ENCODE measurements at regions of chr18 and their contacts with region 1.

Region 1: DNA sequence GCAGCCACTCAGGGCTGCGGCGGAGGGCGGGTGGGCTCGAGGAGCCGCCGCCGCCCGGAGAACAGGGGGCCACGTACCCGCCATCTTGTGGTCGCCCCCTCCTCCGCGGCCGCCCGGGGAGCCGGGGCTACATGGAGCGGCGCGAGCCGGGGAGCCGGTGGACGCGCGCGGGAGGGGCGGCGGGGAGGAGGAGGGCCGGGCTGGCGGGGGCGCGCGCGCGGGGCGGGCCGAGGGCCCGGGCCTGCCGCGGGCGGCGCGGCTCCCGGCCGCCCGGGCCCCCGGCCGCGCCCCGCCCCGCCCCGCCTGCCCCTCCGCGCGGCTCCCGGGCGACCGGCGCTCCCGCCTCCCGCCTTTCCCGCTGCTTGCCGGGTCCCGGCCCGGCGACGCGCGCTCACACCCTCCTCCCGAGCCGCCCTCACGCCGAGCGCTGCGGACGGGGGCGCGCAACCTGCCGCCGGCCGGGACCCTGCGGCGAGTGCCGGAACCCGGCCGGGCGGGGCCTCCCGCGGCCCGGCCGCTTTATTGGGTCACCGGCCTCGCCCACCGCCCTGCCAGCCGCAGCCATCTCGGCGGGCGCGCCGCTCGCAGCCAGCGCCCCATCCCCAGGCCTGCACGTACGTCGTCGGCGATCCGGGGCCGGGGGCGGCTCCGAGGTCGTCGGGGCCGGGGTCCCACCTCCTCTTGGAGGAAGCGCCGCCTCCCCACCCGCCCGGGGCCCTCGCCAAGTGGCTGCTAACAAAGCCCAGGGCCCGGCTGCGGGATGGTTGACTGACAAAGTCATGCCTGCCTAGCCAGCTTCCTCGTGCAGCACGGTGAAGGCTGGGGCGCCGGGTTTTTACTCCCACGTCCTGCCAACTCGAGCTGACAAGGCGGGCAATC is at the start of gene PPP4R1:
- DNase-seq: peak; percentile 33 to 79 (median 56)
- ATAC-seq: peak; percentile 84
- H3K4me3 ChIP-seq: peak within 1 kb of the TSS; percentile 65
- H3K4me3 Mint-ChIP-seq: peak within 1 kb of the TSS; percentile 88 to 99 (median 96)
- H3K27ac ChIP-seq: peak within 1 kb of the TSS; percentile 65
- H3K27ac Mint-ChIP-seq: peak within 1 kb of the TSS; percentile 71 to 96 (median 89)
- H3K4me1 ChIP-seq: peaks cover 12 to 17% of the 10 kb centered on the region in 2 donors
- H3K4me1 Mint-ChIP-seq: peaks cover 26 to 46% (median 33%) of the 10 kb centered on the region in 7 donors
- H3K27me3 ChIP-seq: no peaks in the 10 kb centered on the region
- H3K27me3 Mint-ChIP-seq: peaks cover 0 to 3% (median 0%) of the 10 kb centered on the region in 5 donors
- total RNA-seq, gene PPP4R1: 33.0 to 54.6 (median 38.2) TPM

Region 2: DNA sequence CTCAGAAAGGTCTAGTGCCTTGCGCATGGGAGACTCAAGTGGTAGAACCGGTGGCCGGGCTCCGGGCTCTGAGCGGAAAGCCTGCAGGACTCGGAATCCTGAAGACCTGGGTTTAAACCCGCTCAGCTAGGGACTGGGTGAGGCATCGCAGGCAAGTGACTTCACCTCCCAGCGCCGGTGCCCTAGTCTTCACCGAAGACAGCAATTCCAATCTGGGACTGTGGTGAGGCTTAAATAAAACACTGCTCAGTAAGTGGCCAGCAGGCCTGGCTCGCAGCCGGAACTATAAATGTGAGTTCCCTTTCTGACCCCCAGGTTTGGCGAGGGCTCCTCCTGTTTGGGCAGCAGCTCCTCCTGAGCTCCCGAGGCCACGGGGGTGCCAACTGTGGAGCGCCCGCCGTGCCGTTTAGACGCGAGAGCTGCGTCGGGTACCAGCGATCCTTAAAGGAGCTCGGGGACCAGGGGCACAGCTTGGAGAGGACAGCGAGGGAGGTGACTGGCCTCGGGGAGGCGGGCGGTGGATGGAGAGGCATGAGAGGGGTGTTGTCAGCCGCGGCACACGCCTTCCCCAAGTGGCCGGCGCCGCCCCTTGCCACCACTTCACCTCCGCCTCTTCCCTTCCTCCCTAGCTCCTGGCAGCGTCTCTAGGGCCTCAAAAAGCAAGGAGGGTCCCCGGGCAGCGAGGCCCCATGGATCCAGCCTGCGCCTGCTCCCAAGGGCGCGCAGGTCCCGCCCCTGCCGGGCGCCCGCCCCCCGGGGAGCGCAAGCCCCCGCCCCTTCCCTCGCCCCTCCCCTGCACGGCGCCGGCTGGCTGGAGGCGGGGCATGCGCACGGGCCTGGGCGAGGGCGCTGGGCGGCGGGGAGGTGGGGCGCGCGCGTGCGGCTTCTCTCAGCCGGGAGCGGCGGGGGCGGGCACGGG is 910.0 kb before region 1 on chr18:
- CTCF ChIA-PET with region 1: no interaction called
- POLR2A ChIA-PET with region 1: no interaction called
- intact Hi-C with region 1: loop called (anchors 2 to 10 kb)
- DNase-seq: peak; percentile 65 to 92 (median 75)
- ATAC-seq: peak; percentile 96
- H3K4me3 ChIP-seq: peak overlapping the region; percentile 75
- H3K4me3 Mint-ChIP-seq: peak overlapping the region; percentile 83 to 96 (median 90)
- H3K27ac ChIP-seq: peak overlapping the region; percentile 25
- H3K27ac Mint-ChIP-seq: peak overlapping the region in 4 of 9 donors; percentile 4 to 67 (median 48)
- H3K4me1 ChIP-seq: peaks cover 6 to 21% of the 10 kb centered on the region in 2 donors
- H3K4me1 Mint-ChIP-seq: peaks cover 13 to 29% (median 17%) of the 10 kb centered on the region in 7 donors
- H3K27me3 ChIP-seq: peaks cover 5 to 19% of the 10 kb centered on the region in 2 donors
- H3K27me3 Mint-ChIP-seq: peaks cover 60 to 78% (median 68%) of the 10 kb centered on the region in 5 donors

Region 3: DNA sequence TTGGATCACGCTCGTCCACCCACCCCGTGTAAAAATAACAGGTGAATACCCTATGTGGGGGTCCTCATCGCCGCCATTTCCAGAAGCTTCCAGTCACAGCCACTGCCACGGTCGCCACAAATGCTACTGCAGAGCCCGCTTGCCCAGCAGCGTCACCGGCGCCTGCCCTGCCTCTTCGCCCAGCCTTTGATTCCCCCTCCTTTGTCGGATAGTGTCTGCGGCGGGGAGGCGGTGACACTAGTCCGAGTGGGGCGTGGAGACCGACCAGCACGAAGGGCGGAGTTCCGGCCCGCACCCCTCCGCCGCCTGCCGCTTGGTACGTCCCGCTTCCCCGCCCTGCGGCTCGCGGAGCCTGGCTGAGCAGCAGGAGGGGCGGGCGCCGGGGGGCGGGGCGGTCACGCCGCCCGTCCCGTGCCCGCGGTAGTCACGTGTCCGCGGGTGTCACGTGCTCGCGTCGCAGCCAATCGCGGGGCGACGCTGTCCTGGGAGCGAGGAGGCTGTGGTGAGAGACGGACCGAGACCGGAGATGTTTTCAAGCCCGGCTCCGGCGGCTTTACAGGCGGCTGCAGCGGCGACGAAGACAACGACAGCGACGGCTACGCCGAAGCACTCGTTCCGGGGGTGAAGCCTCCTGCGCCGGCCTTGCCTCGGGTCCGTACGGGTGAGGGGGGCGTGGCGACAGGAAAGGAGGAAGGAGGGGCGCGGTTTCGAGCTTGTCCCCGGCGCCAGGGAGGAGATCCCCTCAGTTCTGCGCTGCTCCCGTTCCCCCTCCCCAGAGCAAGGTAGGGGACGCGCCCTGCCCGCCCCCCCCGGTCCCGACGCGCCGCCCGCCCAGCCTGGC is 478.1 kb before region 1 on chr18 and contains the start of gene ANKRD12:
- CTCF ChIA-PET with region 1: no interaction called
- POLR2A ChIA-PET with region 1: no interaction called
- intact Hi-C with region 1: loop called (anchors 5 to 10 kb)
- DNase-seq: peak; percentile 93 to 98 (median 96)
- ATAC-seq: peak; percentile 89
- H3K4me3 ChIP-seq: peak within 1 kb of the TSS; percentile 86
- H3K4me3 Mint-ChIP-seq: peak within 1 kb of the TSS; percentile 95 to 99 (median 98)
- H3K27ac ChIP-seq: peak within 1 kb of the TSS; percentile 88
- H3K27ac Mint-ChIP-seq: peak within 1 kb of the TSS; percentile 95 to 99 (median 98)
- H3K4me1 ChIP-seq: peaks cover 42 to 50% of the 10 kb centered on the region in 2 donors
- H3K4me1 Mint-ChIP-seq: peaks cover 45 to 75% (median 69%) of the 10 kb centered on the region in 7 donors
- H3K27me3 ChIP-seq: no peaks in the 10 kb centered on the region
- H3K27me3 Mint-ChIP-seq: no peaks in the 10 kb centered on the region
- total RNA-seq, gene ANKRD12: 98.9 to 274 (median 204) TPM

Region 4: GRCh38 chr18:9661564-9661963 is 46.9 kb after region 1 on chr18:
- CTCF ChIA-PET with region 1: no interaction called
- POLR2A ChIA-PET with region 1: no interaction called
- intact Hi-C with region 1: loop called in 1 of 2 experiments (anchors 1 kb)
- DNase-seq: no peak
- ATAC-seq: no peak
- H3K4me3 ChIP-seq: no peak overlapping the region
- H3K4me3 Mint-ChIP-seq: no peak overlapping the region
- H3K27ac ChIP-seq: no peak overlapping the region
- H3K27ac Mint-ChIP-seq: no peak overlapping the region
- H3K4me1 ChIP-seq: no peaks in the 10 kb centered on the region
- H3K4me1 Mint-ChIP-seq: no peaks in the 10 kb centered on the region
- H3K27me3 ChIP-seq: no peaks in the 10 kb centered on the region
- H3K27me3 Mint-ChIP-seq: peaks cover 0 to 8% (median 0%) of the 10 kb centered on the region in 5 donors

Region 5: GRCh38 chr18:9722691-9723090 is 108.1 kb after region 1 on chr18:
- CTCF ChIA-PET with region 1: interaction called, 3 read pairs
- POLR2A ChIA-PET with region 1: no interaction called
- intact Hi-C with region 1: loop called in 1 of 2 experiments (anchors 1 kb)
- DNase-seq: no peak
- ATAC-seq: peak; percentile 32
- H3K4me3 ChIP-seq: no peak overlapping the region
- H3K4me3 Mint-ChIP-seq: no peak overlapping the region
- H3K27ac ChIP-seq: no peak overlapping the region
- H3K27ac Mint-ChIP-seq: no peak overlapping the region
- H3K4me1 ChIP-seq: no peaks in the 10 kb centered on the region
- H3K4me1 Mint-ChIP-seq: no peaks in the 10 kb centered on the region
- H3K27me3 ChIP-seq: no peaks in the 10 kb centered on the region
- H3K27me3 Mint-ChIP-seq: peaks cover 9 to 19% (median 17%) of the 10 kb centered on the region in 5 donors

Region 6: DNA sequence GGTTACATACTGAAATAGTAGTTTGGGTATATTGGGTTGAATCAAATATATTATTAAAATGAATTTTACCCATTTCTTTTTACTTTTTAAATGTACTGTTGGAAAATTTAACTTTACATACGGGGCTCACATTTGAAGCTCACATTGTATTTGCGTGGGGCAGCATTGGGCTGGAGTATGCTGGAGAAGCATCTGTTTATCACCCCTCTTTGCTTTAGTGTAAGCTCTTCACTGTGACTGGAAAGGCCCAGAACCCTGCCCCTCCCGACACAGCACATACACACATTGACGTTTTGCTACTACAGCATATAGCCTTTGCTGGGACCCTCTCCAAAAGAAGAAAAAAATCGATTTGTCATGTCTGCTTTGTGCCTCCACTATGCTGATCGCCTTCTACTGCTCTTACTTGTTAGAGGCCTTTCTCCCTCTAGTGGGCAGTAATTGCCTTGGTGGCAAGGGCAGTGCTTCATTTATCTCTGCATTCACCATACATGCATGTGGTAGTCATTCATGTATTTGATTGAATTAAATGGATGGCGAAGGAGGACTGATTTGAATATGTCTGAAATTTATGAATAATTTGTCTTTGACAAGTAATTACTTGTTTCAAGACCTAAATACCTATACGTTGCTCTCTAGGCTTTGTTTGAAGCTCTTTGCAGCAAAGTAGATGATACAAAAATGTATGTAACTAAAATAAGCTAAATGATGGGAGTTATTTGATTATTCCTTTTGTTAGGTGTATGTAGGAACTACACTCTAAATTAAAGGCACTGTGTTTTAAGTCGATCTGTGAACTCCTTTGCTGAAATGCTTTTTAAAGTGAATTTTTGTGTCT is 336.6 kb after region 1 on chr18:
- CTCF ChIA-PET with region 1: no interaction called
- POLR2A ChIA-PET with region 1: no interaction called
- intact Hi-C with region 1: loop called in 1 of 2 experiments (anchors 2 kb)
- DNase-seq: peak in 4 of 9 donors; percentile 8 to 30 (median 24)
- ATAC-seq: peak; percentile 76
- H3K4me3 ChIP-seq: no peak overlapping the region
- H3K4me3 Mint-ChIP-seq: no peak overlapping the region
- H3K27ac ChIP-seq: no peak overlapping the region
- H3K27ac Mint-ChIP-seq: peak overlapping the region in 5 of 9 donors; percentile 14 to 79 (median 57)
- H3K4me1 ChIP-seq: no peaks in the 10 kb centered on the region
- H3K4me1 Mint-ChIP-seq: peaks cover 2 to 17% (median 10%) of the 10 kb centered on the region in 7 donors
- H3K27me3 ChIP-seq: no peaks in the 10 kb centered on the region
- H3K27me3 Mint-ChIP-seq: no peaks in the 10 kb centered on the region

Measured in naive thymus-derived CD4-positive, alpha-beta T cell (primary cell).